ENCODE measurements at regions of chr11 and their contacts with region 1.

Region 1: DNA sequence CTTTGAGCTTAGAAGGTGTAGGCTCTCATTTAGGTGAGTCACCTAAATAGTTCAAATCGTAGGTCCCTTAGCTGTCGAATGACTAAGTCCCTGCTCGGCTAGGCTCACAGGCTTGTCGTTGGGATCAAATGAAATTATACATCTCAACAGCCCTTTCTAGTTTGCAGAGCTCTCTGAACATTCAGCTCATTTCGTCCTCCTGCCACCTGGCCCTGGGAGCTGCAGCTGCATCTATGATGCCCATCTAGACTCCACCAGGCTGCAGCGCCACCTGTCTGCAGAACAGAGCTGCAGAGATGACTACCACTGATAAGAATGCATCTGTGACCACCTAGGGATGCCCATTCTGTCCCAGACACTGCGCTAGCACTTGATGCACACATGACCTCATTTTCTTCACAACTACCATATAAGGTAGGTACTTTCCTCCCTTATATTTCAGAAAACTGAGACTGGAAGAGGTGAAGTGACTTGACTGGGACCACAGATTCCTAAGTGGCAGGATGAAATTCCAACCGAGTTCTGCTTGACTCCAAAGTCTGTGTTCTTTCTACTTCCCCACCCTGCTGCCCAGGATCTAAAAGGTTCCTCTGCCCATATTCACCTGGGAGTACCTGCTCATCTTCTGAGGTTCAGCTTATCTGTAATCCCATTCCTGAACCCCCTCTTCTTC is 141.1 kb upstream of the NARS2 start:
- DNase-seq: peak; percentile 72
- H3K4me3 ChIP-seq: peak overlapping the region in 1 of 2 experiments; percentile 40; a peak in 1 of 4 replicates
- H3K27ac ChIP-seq: peak overlapping the region in 1 of 2 experiments; percentile 63; a peak in 2 of 4 replicates
- H3K4me1 ChIP-seq: peaks cover 0 to 23% of the 10 kb centered on the region in 2 experiments; a peak in 3 of 4 replicates
- H3K27me3 ChIP-seq: no peaks in the 10 kb centered on the region
- CTCF ChIP-seq: peak; percentile 79
- EP300 ChIP-seq: 0 out of 4 replicates have a peak, but pooled peaks of 1 of the 2 experiments have one; percentile 1
- RAD21 ChIP-seq: peak; percentile 70

Region 2: DNA sequence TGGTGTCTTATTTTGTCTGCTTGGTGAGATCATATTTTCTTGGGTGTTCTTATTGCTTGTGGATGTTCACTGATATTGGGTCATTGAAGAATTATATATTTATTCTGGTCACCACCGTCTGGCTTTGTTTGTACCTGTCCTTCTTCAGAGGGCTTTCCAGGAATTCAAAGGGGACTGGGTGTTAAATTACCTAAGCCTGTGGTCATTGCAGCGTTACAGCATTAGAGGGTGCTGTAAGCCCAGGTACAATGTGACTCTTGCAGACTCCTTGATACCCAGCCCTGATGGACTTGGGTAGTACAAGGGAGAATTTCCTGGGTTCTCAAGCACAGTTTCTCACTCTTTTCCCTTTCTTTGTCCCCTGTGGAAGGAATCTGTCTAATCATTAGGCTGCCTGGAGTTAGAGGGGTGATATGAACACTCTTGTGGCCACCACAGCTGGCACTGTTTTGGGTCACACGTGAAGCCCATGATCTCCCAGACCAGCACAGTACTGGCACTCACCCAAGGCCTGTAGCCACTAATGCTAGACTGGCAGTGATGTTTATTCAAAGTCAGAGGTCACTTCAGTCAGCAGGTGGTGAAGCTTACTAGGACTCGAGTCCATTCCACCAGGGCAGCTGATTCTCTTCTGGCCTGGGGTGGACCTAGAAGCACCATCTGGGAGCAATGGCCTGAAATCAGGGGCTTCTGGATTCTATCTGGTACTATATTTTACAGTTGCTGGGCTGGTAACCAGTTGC is 85.0 kb before region 1 on chr11:
- CTCF ChIA-PET with region 1: no interaction called
- POLR2A ChIA-PET with region 1: no interaction called
- DNase-seq: no peak
- H3K4me3 ChIP-seq: no peak overlapping the region
- H3K27ac ChIP-seq: no peak overlapping the region
- H3K4me1 ChIP-seq: no peaks in the 10 kb centered on the region
- H3K27me3 ChIP-seq: no peaks in the 10 kb centered on the region
- CTCF ChIP-seq: no peak
- EP300 ChIP-seq: no peak
- RAD21 ChIP-seq: no peak

Region 3: GRCh38 chr11:78698612-78699011 is 17.2 kb before region 1 on chr11:
- CTCF ChIA-PET with region 1: interaction called, 12 read pairs
- POLR2A ChIA-PET with region 1: no interaction called
- DNase-seq: no peak
- H3K4me3 ChIP-seq: no peak overlapping the region
- H3K27ac ChIP-seq: peak overlapping the region in 1 of 2 experiments; percentile 14; a peak in 2 of 4 replicates
- H3K4me1 ChIP-seq: peaks cover 4 to 10% of the 10 kb centered on the region in 2 experiments; a peak in 1 of 4 replicates
- H3K27me3 ChIP-seq: no peaks in the 10 kb centered on the region
- CTCF ChIP-seq: no peak
- EP300 ChIP-seq: no peak
- RAD21 ChIP-seq: no peak

Region 4: DNA sequence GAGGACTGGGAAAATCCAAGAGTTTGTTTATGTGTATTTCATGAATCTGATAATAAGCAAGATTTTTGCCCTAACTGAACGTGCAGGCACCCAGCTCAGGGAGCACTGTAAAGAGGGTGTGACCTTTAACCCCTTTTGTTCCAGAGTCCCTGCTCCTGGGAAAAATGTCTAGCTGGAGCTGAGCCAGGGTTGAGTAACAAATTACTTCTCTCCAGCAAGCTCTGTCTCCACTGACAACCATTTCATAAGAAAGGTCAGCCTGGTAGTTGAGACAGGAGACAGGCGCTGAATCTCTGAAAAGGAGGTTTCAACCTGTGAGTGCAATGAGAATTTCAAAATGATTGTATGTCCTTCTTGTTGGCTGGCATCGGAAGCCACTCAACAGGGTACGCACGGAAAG is 15.3 kb after region 1 on chr11:
- CTCF ChIA-PET with region 1: interaction called, 12 read pairs
- POLR2A ChIA-PET with region 1: no interaction called
- DNase-seq: no peak
- H3K4me3 ChIP-seq: no peak overlapping the region
- H3K27ac ChIP-seq: peak overlapping the region in 1 of 2 experiments; percentile 94; a peak in 2 of 4 replicates
- H3K4me1 ChIP-seq: peaks cover 0 to 41% of the 10 kb centered on the region in 2 experiments; a peak in 2 of 4 replicates
- H3K27me3 ChIP-seq: no peaks in the 10 kb centered on the region
- CTCF ChIP-seq: no peak
- EP300 ChIP-seq: no peak
- RAD21 ChIP-seq: no peak

Region 5: DNA sequence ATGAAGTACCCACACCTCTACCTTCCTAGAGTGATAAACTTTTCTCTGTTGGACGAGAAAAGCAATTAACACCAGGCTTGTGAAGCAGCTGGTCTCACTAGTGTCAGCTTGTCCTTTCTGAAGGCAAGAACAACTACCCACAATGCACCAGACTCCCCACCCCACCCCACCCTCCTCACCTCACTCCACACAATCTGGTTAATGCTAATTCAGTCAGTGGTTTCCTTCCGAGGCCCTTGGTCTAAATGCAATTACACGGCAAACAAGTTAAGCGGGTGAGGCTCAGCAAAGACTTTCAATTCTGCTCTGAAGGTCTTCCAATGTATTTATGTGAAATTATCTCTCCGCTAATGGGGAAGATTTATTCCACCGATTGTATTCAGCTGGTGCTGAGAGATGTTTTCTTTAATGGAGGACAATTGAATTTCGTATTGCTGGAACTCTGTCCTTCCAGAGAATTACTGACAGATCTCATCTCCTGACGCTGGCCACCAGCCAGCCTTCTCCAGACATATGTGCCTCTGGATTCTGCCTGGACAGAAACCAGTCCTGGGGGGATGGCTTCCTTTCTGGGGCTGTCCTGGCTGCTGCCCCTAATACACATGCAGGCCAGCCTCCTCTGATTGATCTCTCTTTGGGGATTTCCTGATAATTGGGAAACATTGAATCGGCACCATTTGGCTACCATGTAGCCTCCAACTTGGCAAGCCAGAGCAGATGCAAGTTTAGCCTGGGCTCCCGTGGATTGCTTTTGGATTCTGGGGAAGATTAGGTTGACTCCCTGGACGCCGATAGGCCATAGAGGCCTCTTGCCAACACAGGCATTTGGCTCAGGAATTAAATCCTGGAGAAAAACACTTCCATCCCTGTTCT is 24.7 kb after region 1 on chr11:
- CTCF ChIA-PET with region 1: interaction called, 14 read pairs
- POLR2A ChIA-PET with region 1: no interaction called
- DNase-seq: peak; percentile 81
- H3K4me3 ChIP-seq: no peak overlapping the region
- H3K27ac ChIP-seq: peak overlapping the region in 1 of 2 experiments; percentile 100; a peak in 2 of 4 replicates
- H3K4me1 ChIP-seq: peaks cover 0 to 57% of the 10 kb centered on the region in 2 experiments; a peak in 2 of 4 replicates
- H3K27me3 ChIP-seq: no peaks in the 10 kb centered on the region
- CTCF ChIP-seq: no peak
- EP300 ChIP-seq: peak; percentile 43 to 97; a peak in 3 of 4 replicates
- RAD21 ChIP-seq: peak; percentile 29